Posterior cingulate gyrus (tissue), 11 donors: ENCODE measurements at regions of chrX and their contacts with region 1.

Region 1: DNA sequence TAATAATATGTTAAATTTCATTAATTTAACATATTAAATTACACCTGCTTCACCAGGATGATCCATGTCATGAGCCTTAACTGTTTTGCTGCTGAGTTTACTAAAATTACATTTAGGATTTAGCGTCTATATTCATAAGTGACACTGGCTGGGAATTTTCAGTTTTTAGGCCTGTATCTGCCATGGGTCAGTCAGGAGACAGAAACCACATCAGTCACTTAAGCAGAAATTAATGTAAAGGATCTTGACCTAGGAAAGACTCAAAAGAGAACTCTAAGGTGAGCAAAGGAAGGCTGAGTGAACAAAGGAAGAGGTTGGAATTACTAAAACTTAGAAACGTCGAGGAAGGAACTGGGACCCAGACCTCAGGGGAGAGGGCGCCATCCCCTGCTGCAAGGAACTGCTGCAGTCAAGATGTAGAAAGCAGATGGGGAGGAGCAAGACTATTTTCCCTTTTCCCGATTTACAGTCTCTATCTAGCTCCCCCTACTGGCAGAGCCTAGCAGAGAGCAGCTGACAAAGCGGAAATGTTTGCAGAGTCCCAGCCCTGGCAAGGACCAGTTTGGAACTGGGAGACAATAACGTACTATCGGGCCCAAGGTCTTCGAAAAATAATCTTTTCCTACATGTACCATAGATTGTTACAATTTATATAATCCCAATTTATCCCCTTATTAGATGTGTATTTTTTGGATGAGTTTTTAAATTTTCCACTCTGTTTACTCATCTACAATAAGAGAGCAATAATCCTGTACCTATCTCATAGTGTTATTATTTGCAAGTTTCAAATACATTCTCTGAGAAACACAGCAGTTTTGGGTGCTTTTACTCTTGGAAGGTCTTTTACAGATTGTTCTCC is 22.6 kb upstream of the RBBP7 start:
- DNase-seq: peak in 8 of 10 donors; percentile 36 to 89 (median 56)

Region 2: GRCh38 chrX:16946361-16946964 is 53.7 kb after region 1 on chrX and contains the start of gene REPS2:
- intact Hi-C with region 1: loop called (anchors 10 kb)
- DNase-seq: peak; percentile 74 to 96 (median 82)

Region 3: DNA sequence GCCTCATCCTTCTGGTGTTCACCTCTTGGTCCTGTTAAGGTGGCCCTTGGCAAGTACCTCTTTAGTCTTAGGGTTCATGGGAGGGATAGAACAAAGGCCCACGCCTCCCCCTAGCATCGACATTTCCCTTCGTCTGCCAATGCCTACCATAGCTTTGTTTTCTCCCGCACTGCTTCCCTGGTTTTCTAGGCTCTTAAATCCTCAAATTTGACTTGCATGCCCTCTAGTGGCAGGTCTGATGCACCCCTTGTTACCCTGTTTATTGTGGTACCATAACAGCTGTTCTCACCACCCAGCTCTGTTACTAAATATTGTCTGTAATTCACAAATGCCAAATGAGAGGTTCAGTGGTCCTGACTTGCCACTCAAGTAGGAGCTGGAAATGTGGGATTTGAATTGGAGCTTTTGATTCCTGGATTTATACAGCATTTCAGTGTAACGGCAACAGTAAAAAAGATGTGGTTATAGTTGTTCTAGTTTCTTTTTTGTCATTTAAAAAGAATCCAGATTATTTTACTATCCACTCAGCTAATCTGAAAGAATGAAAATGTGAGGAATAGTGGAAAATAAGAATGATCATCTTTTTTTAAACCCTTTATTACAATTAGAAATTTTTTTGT is 153.9 kb after region 1 on chrX:
- intact Hi-C with region 1: loop called (anchors 5 kb)
- DNase-seq: peak in 6 of 10 donors; percentile 41 to 89 (median 51)

Region 4: DNA sequence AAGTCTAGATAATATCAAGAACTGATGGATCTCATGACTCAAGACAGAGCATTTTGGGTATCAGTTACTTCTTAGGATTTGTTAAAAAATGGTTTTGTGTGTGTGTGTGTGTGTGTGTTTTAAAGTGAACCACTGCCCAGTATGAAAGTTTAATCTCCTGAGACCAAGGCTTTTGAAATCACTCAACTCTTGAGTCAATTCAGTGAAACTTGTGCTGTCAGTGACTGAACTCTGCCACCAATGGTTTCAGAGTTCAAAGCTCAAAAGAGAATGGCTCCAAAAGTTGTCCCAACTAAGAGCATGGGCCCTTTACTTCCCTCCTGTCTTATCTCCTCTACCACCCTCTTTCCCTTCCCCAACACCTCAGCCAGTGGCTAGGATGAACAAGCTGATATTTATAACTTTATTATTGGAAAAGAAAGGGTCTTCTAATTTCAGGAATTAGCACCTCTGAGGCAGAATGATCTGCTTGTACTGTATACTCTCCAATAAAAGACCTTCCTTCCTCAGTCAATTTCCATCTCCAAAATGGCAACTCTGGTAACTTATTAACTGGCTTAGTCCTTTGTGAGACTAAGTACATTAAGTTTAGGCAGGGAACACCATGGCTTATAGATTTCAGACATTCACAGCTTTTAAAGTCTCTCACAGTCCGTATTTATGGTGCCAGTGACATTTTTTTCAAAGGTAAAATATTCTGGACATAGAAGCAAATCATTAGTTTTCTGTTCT is 205.9 kb after region 1 on chrX:
- intact Hi-C with region 1: no loop called
- DNase-seq: no peak